Kidney (tissue), 22 donors: ENCODE measurements at regions of chr1 and their contacts with region 1.

Region 1: GRCh38 chr1:221435504-221435904 is 306.4 kb downstream of the DUSP10 start:
- DNase-seq: peak in 2 of 5 donors; percentile 59 to 73
- H3K4me3 ChIP-seq: no peak overlapping the region
- H3K27ac ChIP-seq: no peak overlapping the region
- H3K4me1 ChIP-seq: peaks cover 0 to 4% (median 0%) of the 10 kb centered on the region in 3 donors
- H3K27me3 ChIP-seq: no peaks in the 10 kb centered on the region
- CTCF ChIP-seq: peak; percentile 85

Region 2: GRCh38 chr1:220879076-220879508 is 556.4 kb before region 1 on chr1 and contains the start of gene HLX:
- intact Hi-C with region 1: loop called (anchors 10 kb)
- DNase-seq: peak; percentile 67 to 94 (median 84)
- H3K4me3 ChIP-seq: peak within 1 kb of the TSS; percentile 6 to 48 (median 44)
- H3K27ac ChIP-seq: peak within 1 kb of the TSS; percentile 83 to 85
- H3K4me1 ChIP-seq: peaks cover 0 to 3% (median 0%) of the 10 kb centered on the region in 3 donors
- H3K27me3 ChIP-seq: peaks cover 53% of the 10 kb centered on the region
- CTCF ChIP-seq: no peak
- total RNA-seq, gene HLX: 8.2 TPM

Region 3: DNA sequence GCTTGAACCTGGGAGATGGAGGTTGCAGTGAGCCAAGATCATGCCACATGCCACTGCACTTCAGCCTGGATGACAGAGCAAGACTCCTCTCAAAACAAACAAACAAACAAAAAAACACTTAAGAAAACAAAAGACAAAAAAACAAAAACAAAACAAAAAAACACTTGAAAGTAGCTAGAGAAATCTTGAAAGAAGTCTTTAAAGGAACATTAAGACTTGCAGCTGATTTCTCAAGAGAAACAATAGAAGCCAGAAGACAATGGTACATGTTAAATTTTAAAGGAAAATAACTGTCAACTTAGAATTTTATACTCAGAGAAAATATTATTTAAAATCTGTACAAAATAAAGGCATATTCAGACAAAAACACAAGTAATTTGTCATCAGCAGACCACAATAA is 484.9 kb before region 1 on chr1:
- intact Hi-C with region 1: no loop called
- DNase-seq: no peak
- H3K4me3 ChIP-seq: no peak overlapping the region
- H3K27ac ChIP-seq: no peak overlapping the region
- H3K4me1 ChIP-seq: no peaks in the 10 kb centered on the region
- H3K27me3 ChIP-seq: no peaks in the 10 kb centered on the region
- CTCF ChIP-seq: no peak

Region 4: DNA sequence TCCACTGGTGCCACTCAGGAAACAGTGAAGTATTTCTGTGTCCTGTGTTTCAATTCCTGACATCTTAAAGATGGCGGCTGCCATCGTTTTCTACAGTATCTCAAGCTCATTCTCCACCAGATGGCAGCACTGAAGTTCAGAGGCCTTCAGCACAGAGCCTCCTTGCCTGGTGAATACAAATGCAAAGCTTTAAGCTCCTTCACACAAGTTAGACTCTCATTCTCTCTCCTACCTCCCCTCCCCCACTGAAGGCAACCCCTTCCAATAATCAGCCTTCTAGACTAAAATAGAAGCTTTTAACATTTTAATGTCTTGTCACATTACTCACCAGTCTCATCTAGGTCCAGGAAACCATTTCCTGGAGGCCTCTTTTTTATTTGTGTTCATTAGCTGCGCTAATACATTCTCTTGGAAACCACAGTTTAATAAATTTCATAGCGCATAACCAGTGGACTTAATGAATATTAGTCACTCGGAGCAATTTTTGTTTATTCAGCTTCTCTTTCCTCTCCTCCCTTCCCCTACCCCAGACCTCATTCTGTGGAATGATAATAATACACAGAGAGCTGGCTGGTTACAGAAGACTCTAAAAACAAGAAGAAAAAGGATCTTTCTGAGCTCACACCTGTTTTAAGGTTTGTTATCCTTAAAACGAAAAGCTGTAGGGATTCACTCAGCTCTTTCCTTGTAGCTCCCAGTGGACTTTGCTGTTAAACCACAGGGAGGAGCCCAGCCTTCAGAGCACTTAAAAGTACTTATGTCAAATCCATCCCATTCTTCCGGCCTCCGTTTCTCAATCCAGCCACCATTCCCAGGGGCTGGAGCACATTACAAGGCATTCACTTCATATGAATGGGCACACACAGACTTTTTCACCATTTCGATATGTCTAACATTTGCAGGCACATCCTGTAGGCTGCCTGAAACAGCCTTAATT is 171.4 kb before region 1 on chr1:
- intact Hi-C with region 1: loop called (anchors 10 kb)
- DNase-seq: peak in 4 of 5 donors; percentile 45 to 87 (median 62)
- H3K4me3 ChIP-seq: no peak overlapping the region
- H3K27ac ChIP-seq: no peak overlapping the region
- H3K4me1 ChIP-seq: no peaks in the 10 kb centered on the region
- H3K27me3 ChIP-seq: no peaks in the 10 kb centered on the region
- CTCF ChIP-seq: peak; percentile 50